Naive thymus-derived CD4-positive, alpha-beta T cell (primary cell): ENCODE measurements at regions of chr3 and their contacts with region 1.

Region 1: GRCh38 chr3:151168269-151169094 is 34.5 kb downstream of the GPR171 start:
- DNase-seq: peak; percentile 55 to 79 (median 68)
- ATAC-seq: peak; percentile 77
- H3K4me3 ChIP-seq: no peak overlapping the region
- H3K4me3 Mint-ChIP-seq: no peak overlapping the region
- H3K27ac ChIP-seq: no peak overlapping the region
- H3K27ac Mint-ChIP-seq: peak overlapping the region in 1 of 9 donors; percentile 31
- H3K4me1 ChIP-seq: peaks cover 24 to 30% of the 10 kb centered on the region in 2 donors
- H3K4me1 Mint-ChIP-seq: peaks cover 28 to 48% (median 40%) of the 10 kb centered on the region in 7 donors
- H3K27me3 ChIP-seq: no peaks in the 10 kb centered on the region
- H3K27me3 Mint-ChIP-seq: no peaks in the 10 kb centered on the region

Region 2: DNA sequence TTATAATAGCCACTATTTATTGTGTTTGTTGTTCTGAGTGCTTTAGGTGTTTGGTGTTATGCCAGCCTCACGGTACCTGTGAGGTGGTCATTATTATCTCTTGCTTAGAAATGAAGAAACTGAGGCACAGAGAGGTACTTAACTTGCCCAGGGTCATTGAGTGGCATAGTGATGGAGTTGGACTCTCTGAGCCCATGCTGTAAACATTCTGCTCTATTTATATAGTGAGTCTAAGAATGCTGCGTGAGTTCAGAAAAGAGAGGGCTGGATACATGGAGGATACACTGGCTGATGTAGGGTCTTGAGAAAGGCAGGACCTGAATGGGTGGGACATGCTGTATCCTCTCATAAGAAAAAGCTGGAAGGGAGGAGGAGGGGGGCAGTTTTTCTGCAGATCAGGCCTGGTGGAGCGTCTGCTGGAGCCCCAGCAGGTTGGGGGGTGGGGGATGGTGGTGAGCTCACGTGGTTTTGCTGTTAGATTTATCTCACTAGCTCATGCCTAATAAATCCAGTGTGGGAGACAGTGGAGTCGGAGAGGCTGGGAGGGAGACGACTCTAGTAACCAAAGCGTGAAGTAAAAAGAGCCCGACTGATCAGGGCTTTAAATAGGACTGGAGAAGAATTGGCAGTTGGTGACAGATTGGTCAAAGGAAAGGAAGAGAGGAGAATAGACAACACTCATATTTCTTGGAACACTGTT is 67.1 kb before region 1 on chr3:
- CTCF ChIA-PET with region 1: no interaction called
- POLR2A ChIA-PET with region 1: no interaction called
- intact Hi-C with region 1: no loop called
- DNase-seq: no peak
- ATAC-seq: no peak
- H3K4me3 ChIP-seq: no peak overlapping the region
- H3K4me3 Mint-ChIP-seq: no peak overlapping the region
- H3K27ac ChIP-seq: no peak overlapping the region
- H3K27ac Mint-ChIP-seq: no peak overlapping the region
- H3K4me1 ChIP-seq: no peaks in the 10 kb centered on the region
- H3K4me1 Mint-ChIP-seq: no peaks in the 10 kb centered on the region
- H3K27me3 ChIP-seq: no peaks in the 10 kb centered on the region
- H3K27me3 Mint-ChIP-seq: peaks cover 8 to 42% (median 15%) of the 10 kb centered on the region in 5 donors

Region 3: DNA sequence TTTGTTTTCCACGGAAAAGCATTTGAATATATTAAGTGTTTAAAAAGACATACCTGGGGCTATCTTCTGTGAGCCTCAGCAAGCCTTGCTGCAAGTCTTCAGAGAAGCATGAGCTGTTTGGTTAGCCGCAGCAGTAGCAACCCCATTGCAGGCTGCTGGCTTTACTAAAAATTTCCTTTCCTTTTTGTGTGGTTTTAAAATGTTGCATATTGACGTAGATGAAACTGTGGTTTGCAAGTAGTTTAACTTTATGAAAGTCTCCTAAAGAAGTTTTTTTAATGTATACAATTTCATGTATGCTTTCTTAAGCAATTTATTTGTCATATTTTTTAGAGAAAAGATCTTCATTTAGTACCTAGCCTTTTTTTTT is 34.6 kb after region 1 on chr3 and contains the start of gene GPR171:
- CTCF ChIA-PET with region 1: interaction called, 23 read pairs
- POLR2A ChIA-PET with region 1: interaction called, 70 read pairs
- intact Hi-C with region 1: loop called (anchors 1 kb)
- DNase-seq: peak in 8 of 9 donors; percentile 62 to 88 (median 82)
- ATAC-seq: peak; percentile 95
- H3K4me3 ChIP-seq: peak within 1 kb of the TSS; percentile 79
- H3K4me3 Mint-ChIP-seq: peak within 1 kb of the TSS; percentile 72 to 94 (median 84)
- H3K27ac ChIP-seq: peak within 1 kb of the TSS; percentile 75
- H3K27ac Mint-ChIP-seq: peak within 1 kb of the TSS; percentile 76 to 98 (median 94)
- H3K4me1 ChIP-seq: peaks cover 45 to 57% of the 10 kb centered on the region in 2 donors
- H3K4me1 Mint-ChIP-seq: peaks cover 34 to 82% (median 71%) of the 10 kb centered on the region in 7 donors
- H3K27me3 ChIP-seq: no peaks in the 10 kb centered on the region
- H3K27me3 Mint-ChIP-seq: no peaks in the 10 kb centered on the region
- total RNA-seq, gene GPR171: 16.0 to 251 (median 63.4) TPM

Region 4: GRCh38 chr3:151268267-151269235 is 100.1 kb after region 1 on chr3:
- CTCF ChIA-PET with region 1: interaction called, 10 read pairs
- POLR2A ChIA-PET with region 1: no interaction called
- intact Hi-C with region 1: no loop called
- DNase-seq: peak in 5 of 9 donors; percentile 15 to 52 (median 23)
- ATAC-seq: peak; percentile 39
- H3K4me3 ChIP-seq: no peak overlapping the region
- H3K4me3 Mint-ChIP-seq: peak overlapping the region in 9 of 10 donors; percentile 28 to 84 (median 70)
- H3K27ac ChIP-seq: peak overlapping the region; percentile 1
- H3K27ac Mint-ChIP-seq: peak overlapping the region; percentile 70 to 92 (median 83)
- H3K4me1 ChIP-seq: no peaks in the 10 kb centered on the region
- H3K4me1 Mint-ChIP-seq: peaks cover 8 to 58% (median 22%) of the 10 kb centered on the region in 7 donors
- H3K27me3 ChIP-seq: no peaks in the 10 kb centered on the region
- H3K27me3 Mint-ChIP-seq: peaks cover 0 to 4% (median 0%) of the 10 kb centered on the region in 5 donors

Region 5: DNA sequence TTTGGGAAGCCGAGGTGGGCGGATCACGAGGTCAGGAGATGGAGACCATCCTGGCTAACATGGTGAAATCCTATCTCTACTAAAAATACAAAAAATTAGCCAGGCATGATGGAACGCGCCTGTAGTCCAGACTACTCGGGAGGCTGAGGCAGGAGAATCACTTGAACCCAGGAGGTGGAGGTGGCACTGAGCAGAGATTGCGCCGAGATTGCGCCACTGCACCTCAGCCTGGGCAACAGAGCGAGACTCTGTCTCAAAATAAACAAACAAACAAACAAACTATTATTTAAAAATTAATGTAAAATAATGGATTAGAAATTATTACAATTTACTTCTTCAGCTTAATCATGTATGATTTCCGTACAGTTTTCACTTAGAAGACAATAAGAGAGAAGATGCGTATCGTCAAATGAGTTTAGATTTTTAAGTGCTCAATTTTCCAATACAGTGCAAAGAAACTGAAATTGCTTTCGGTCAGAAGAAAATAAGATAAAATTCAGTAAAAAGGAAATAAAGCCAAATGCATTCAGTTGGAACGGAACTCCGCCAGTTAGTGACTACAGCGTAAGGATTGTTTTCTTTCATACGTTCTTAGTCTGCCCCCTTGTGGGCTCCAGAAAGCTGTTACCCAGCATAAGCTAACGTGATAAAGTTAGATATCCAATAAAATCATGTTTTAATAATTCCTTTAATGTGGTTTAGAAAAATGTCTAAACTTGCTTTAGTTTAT is 670.3 kb after region 1 on chr3:
- CTCF ChIA-PET with region 1: interaction called, 4 read pairs
- POLR2A ChIA-PET with region 1: no interaction called
- intact Hi-C with region 1: loop called in 1 of 2 experiments (anchors 1 kb)
- DNase-seq: peak in 6 of 9 donors; percentile 6 to 40 (median 26)
- ATAC-seq: peak; percentile 70
- H3K4me3 ChIP-seq: no peak overlapping the region
- H3K4me3 Mint-ChIP-seq: no peak overlapping the region
- H3K27ac ChIP-seq: no peak overlapping the region
- H3K27ac Mint-ChIP-seq: no peak overlapping the region
- H3K4me1 ChIP-seq: no peaks in the 10 kb centered on the region
- H3K4me1 Mint-ChIP-seq: peaks cover 0 to 3% (median 0%) of the 10 kb centered on the region in 7 donors
- H3K27me3 ChIP-seq: no peaks in the 10 kb centered on the region
- H3K27me3 Mint-ChIP-seq: peaks cover 6 to 42% (median 11%) of the 10 kb centered on the region in 5 donors